Activated naive CD4-positive, alpha-beta T cell treated with anti-CD3 and anti-CD28 coated beads for 36 hours (primary cell): ENCODE measurements at regions of chr19 and their contacts with region 1.

Region 1: DNA sequence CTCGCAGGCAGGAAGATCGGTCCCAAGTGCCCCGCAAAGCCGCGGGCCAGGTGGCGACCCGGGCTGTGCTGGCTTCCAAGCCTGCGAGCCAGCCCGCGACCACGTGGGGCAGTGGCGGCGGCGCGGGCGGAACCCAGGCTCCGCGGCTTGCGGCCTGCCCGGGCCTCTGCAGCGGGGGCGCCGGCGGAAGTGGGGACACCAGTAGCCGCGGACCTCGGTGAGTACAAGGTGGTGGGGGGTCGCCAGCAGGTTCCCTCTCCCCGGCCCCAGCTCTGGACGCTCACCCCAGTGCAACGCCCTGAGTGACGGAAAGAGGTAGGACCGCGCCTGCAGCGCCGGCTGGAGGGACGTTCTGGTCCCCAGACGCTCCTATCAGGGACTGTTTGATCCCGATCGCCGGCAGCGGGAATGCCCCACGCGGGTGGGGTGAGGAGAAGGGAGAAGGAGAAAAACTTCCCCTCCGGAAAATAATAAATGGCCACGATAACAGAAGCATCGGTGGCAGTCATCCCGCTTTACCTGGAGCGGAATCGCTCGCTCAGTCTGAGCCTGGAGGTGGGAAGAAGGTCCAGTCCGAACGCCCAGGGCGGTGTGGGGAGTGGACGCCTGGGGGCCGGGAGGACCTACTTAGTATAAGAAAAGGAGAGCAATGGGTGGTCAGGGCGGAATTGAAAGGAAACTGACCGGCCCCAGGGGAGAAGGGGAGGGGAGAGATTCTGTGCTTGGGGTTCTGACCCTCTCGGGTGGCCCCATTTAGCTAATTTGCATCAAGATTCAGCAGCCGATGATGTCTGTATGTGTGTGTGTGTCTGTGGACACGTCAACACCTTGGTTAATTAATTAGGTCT is at the start of gene GEMIN7:
- DNase-seq: peak; percentile 82
- H3K4me3 Mint-ChIP-seq: peak within 1 kb of the TSS; percentile 96
- H3K27ac Mint-ChIP-seq: peak within 1 kb of the TSS; percentile 76
- H3K4me1 Mint-ChIP-seq: peaks cover 50% of the 10 kb centered on the region
- H3K27me3 Mint-ChIP-seq: no peaks in the 10 kb centered on the region
- total RNA-seq, gene GEMIN7: 14.7 to 15.4 TPM

Region 2: DNA sequence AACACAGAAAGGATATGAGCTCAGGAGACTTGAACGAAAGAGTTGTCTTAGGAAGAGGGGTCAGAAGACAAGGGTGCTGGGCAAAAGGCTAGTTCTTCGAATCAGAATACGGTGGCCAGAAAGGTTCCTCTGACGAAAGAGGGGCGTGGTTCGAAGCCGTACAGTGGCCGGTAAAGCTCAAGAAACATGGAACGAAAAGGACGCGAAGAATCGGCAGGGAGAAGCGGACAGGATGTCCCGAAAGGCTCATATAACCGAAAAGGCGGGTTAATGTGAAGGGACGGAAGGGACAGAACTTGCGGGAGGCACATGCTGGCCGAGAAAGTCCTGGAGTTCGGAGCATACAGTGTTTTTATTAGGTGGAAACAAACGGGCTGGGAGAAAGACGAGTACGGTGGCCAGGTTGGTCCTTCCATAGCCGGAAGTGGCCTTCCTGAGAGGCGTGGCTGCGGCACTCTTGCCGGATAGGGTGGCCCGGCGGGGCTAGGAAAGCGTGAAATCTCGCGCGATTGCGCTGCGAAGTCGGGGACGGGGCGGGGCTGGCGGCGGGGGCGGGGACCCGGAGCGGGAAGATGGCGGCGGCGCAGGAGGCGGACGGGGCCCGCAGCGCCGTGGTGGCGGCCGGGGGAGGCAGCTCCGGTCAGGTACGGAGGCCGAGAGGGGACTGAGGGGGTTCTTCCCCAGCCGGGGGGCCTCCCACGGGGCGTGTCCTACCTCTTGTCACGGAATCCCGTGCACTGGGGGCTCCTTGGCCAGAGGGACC is 124.3 kb before region 1 on chr19 and contains the start of gene CLPTM1:
- CTCF ChIA-PET with region 1: no interaction called
- intact Hi-C with region 1: loop called (anchors 1 kb)
- DNase-seq: peak; percentile 98
- H3K4me3 Mint-ChIP-seq: peak within 1 kb of the TSS; percentile 98
- H3K27ac Mint-ChIP-seq: peak within 1 kb of the TSS; percentile 98
- H3K4me1 Mint-ChIP-seq: peaks cover 48% of the 10 kb centered on the region
- H3K27me3 Mint-ChIP-seq: no peaks in the 10 kb centered on the region
- total RNA-seq, gene CLPTM1: 32.4 to 34.6 TPM

Region 3: GRCh38 chr19:45038931-45039893 is 40.1 kb before region 1 on chr19 and contains the start of gene CLASRP:
- CTCF ChIA-PET with region 1: no interaction called
- intact Hi-C with region 1: loop called (anchors 1 kb)
- DNase-seq: peak; percentile 91
- H3K4me3 Mint-ChIP-seq: peak within 1 kb of the TSS; percentile 91
- H3K27ac Mint-ChIP-seq: peak within 1 kb of the TSS; percentile 90
- H3K4me1 Mint-ChIP-seq: peaks cover 33% of the 10 kb centered on the region
- H3K27me3 Mint-ChIP-seq: no peaks in the 10 kb centered on the region
- total RNA-seq, gene CLASRP: 106 to 113 TPM

Region 4: DNA sequence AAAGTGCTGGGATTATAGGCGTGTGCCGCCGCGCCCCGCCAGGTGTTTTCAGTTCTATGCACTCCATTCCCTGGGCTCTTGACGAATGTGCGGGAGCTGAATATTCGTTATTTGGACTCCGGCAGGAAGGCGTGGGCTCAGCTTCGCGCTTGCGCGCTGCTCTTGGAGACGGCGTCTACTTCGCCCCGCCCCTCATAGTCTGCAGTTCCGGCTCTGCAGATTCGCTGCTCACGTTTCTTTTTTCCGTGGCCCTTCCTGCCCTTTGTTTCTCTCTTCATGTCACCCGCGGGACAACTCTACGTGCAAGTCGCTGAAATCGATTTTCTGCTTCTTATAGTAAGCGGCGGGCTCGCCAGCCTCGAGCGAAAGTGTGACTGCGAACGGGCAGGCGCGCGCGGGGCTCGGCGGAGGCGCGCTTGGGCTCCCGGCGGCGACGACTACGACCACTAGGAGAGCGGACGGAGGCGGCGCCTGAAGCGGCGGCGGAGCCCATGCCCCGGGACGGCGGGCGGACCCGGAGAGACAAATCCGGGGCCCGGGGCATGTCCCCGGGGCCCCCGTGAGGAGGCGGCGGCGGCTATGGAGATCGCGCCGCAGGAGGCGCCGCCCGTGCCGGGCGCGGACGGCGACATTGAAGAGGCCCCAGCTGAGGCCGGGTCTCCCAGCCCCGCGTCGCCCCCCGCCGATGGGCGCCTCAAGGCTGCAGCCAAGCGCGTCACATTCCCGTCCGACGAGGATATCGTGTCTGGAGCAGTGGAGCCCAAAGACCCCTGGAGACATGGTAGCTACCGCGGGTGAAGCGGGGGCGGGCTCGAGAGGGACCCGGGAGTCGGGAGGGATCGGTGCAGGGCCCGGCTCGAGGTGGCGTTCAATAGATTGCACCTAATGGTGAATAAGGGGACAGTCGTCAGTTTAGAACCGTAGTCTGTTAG is 13.7 kb after region 1 on chr19 and contains the start of gene PPP1R37:
- CTCF ChIA-PET with region 1: interaction called, 4 read pairs
- intact Hi-C with region 1: loop called (anchors 1 kb)
- DNase-seq: peak; percentile 95
- H3K4me3 Mint-ChIP-seq: peak within 1 kb of the TSS; percentile 93
- H3K27ac Mint-ChIP-seq: peak within 1 kb of the TSS; percentile 98
- H3K4me1 Mint-ChIP-seq: peaks cover 50% of the 10 kb centered on the region
- H3K27me3 Mint-ChIP-seq: no peaks in the 10 kb centered on the region
- total RNA-seq, gene PPP1R37: 10.2 to 10.3 TPM

Region 5: GRCh38 chr19:45117669-45118068 is 38.4 kb after region 1 on chr19:
- CTCF ChIA-PET with region 1: no interaction called
- intact Hi-C with region 1: loop called (anchors 5 kb)
- DNase-seq: no peak
- H3K4me3 Mint-ChIP-seq: no peak overlapping the region
- H3K27ac Mint-ChIP-seq: no peak overlapping the region
- H3K4me1 Mint-ChIP-seq: peaks cover 66% of the 10 kb centered on the region
- H3K27me3 Mint-ChIP-seq: no peaks in the 10 kb centered on the region